Posterior cingulate gyrus (tissue), 11 donors: ENCODE measurements at regions of chr7 and their contacts with region 1.

Region 1: GRCh38 chr7:74544706-74545469 is 91.2 kb downstream of the GTF2IRD1 start:
- DNase-seq: no peak

Region 2: GRCh38 chr7:74424291-74424880 is 120.5 kb before region 1 on chr7:
- intact Hi-C with region 1: loop called (anchors 5 kb)
- DNase-seq: no peak